ENCODE measurements at regions of chr11 and their contacts with region 1.

Region 1: GRCh38 chr11:63681321-63682049 is at the start of gene RTN3:
- DNase-seq: peak; percentile 98 to 99
- H3K4me3 ChIP-seq: peak within 1 kb of the TSS; percentile 79 to 92 (median 82)
- H3K27ac ChIP-seq: peak within 1 kb of the TSS; percentile 96 to 100 (median 96)
- H3K4me1 ChIP-seq: peaks cover 17 to 47% (median 32%) of the 10 kb centered on the region in 4 donors
- H3K27me3 ChIP-seq: no peaks in the 10 kb centered on the region
- CTCF ChIP-seq: peak in 3 of 7 experiments; percentile 11 to 69 (median 14)
- EP300 ChIP-seq: no peak
- POLR2A ChIP-seq: peak in 2 of 4 donors; percentile 84 to 93
- total RNA-seq, gene RTN3: 22.2 to 83.8 (median 28.6) TPM

Region 2: DNA sequence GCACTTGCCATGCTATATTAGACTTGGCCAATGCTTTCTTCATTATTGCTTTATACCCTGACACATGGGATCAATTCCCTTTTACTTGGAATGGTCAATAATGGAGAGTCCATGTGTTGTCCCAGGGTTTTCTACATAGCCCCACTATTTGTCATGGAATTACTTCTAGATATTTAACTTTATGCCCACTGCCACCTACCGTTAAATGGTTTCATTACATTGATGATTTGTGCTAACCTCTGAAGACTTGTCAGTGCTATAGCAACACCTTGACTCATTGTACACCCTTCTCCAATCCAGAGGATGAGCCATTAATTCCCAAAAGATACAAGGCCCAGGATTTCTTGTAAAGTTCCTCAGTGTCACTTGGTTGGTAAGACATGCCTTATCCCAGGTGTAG is 406.7 kb before region 1 on chr11:
- intact Hi-C with region 1: no loop called
- DNase-seq: no peak
- H3K4me3 ChIP-seq: no peak overlapping the region
- H3K27ac ChIP-seq: no peak overlapping the region
- H3K4me1 ChIP-seq: no peaks in the 10 kb centered on the region
- H3K27me3 ChIP-seq: no peaks in the 10 kb centered on the region
- CTCF ChIP-seq: no peak
- EP300 ChIP-seq: no peak
- POLR2A ChIP-seq: no peak

Region 3: DNA sequence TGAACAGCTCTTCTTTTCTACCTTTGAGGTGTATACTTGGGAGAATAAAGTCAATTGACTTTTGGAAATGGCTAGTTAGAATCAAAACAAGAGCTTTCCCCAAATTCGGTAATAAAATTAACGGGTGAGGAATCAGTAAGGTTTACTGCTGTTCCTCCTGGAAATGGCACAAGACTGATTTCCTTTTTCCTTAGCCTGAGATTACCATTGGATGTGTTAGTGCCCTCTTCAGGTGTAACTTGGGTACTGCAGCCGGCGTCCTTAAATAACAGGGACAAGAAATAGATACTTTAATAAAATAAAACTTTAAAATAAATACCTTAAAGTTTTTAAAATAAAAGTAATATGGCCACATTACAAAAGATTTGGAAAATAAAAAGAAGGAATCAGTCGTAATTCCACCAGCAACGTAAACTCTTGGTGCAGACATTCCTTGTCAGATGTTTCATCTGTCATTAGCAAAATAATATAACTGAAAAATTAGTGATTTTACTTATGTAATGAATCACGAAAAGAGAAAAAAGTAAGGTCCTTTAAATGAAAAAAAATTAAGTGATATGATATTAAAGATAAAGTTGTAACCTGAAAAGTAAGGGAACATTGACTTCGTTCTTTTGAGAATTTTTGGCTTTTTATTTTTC is 57.4 kb after region 1 on chr11:
- intact Hi-C with region 1: loop called (anchors 10 kb)
- DNase-seq: peak; percentile 82 to 87
- H3K4me3 ChIP-seq: no peak overlapping the region
- H3K27ac ChIP-seq: peak overlapping the region in 1 of 5 donors; percentile 5
- H3K4me1 ChIP-seq: peaks cover 0 to 8% (median 4%) of the 10 kb centered on the region in 4 donors
- H3K27me3 ChIP-seq: no peaks in the 10 kb centered on the region
- CTCF ChIP-seq: peak in 6 of 7 experiments; percentile 11 to 99 (median 90)
- EP300 ChIP-seq: no peak
- POLR2A ChIP-seq: no peak